ENCODE measurements at regions of chr4 and their contacts with region 1.

Region 1: GRCh38 chr4:41214136-41214824 is at the start of gene APBB2:
- DNase-seq: peak; percentile 95 to 98 (median 96)
- ATAC-seq: peak; percentile 92 to 95 (median 94)
- H3K4me3 ChIP-seq: peak within 1 kb of the TSS; percentile 70 to 93 (median 86)
- H3K27ac ChIP-seq: peak within 1 kb of the TSS; percentile 30 to 94 (median 88)
- H3K4me1 ChIP-seq: peaks cover 0 to 57% (median 27%) of the 10 kb centered on the region in 12 donors
- H3K27me3 ChIP-seq: peaks cover 0 to 8% (median 0%) of the 10 kb centered on the region in 9 donors
- CTCF ChIP-seq: peak; percentile 80 to 97 (median 92)
- POLR2A ChIP-seq: peak in 1 of 2 donors; percentile 94
- total RNA-seq, gene APBB2: 19.1 to 39.1 (median 32.1) TPM

Region 2: DNA sequence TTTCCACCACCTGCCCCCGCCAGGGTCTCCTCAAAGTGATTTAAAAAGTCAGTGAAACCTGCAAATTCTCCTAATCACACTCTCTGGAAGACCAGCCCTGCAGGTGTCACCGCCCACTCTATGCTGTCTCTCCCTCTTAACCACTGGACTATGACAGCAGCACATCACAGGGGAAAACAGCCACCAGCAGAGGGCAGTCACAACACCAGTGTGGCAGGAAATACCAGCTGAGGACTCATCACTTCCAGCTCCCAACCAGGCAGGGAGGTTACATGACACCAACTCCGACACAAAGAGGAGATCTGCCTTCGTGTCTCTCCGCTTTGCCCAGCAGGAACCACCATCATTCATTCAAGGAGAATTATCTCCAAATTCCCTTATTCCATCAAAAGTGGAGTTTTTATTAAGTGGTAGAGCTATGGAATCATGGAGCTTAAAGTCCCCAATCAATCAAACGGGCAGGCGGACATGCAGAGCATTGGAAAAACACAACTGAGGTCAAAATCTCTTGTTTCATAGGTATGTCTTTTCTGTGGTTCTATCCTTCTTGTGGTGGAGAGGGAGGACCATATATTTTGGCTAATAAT is 373.2 kb before region 1 on chr4:
- intact Hi-C with region 1: loop called in 1 of 10 experiments (anchors 2 kb)
- DNase-seq: peak; percentile 63 to 82 (median 70)
- ATAC-seq: peak; percentile 32 to 70 (median 66)
- H3K4me3 ChIP-seq: no peak overlapping the region
- H3K27ac ChIP-seq: peak overlapping the region in 2 of 12 donors; percentile 68 to 73
- H3K4me1 ChIP-seq: peaks cover 0 to 27% (median 12%) of the 10 kb centered on the region in 12 donors
- H3K27me3 ChIP-seq: no peaks in the 10 kb centered on the region
- CTCF ChIP-seq: peak; percentile 40 to 71 (median 56)
- POLR2A ChIP-seq: no peak

Region 3: GRCh38 chr4:40976343-40976742 is 237.9 kb before region 1 on chr4:
- intact Hi-C with region 1: loop called (anchors 1 to 2 kb)
- DNase-seq: peak in 1 of 5 donors; percentile 52
- ATAC-seq: peak in 2 of 4 donors; percentile 52 to 63
- H3K4me3 ChIP-seq: no peak overlapping the region
- H3K27ac ChIP-seq: no peak overlapping the region
- H3K4me1 ChIP-seq: peaks cover 0 to 7% (median 0%) of the 10 kb centered on the region in 12 donors
- H3K27me3 ChIP-seq: no peaks in the 10 kb centered on the region
- CTCF ChIP-seq: peak; percentile 63 to 87 (median 75)
- POLR2A ChIP-seq: no peak

Region 4: DNA sequence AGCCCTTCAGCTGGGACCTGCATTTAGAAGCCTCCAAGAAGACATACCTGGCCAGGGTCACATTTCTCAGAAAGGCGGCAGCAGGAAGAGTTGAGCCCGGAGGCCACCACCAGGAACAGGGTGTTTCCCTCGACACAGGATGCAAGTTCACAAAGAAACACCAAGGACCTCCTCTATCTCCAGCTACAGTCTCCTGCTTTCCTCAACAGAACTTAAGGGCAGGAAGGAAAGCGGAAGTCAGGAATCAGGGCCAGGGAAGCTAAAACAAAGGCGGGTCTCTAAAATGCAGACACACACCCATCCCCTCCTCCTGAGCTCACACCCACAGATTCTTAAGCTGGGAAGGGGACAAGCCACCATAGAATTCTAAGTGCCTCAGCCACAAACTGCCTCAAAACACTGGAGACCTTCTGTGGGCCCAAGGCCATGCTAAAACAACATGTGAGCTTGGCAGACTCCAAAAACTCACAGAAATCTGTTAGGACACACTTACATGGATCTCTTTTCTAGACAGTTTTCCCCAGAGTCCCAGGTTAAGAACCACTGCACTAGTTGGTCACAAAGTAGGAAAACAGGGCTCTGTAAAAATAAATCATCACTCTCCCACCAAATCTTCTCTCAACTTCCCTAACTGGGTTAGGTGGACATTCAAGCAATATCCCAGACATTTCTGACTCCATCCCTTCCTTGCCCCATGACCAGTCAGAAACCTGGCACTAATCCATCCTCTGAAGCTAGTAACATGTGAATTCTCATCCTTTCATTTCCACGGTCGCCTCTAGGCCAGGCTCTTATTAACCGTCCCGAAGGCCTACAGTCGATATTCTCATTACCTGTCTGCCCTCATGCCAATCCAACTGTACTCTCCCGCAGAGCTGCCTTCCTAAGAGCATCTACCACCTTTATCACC is 163.2 kb before region 1 on chr4:
- intact Hi-C with region 1: loop called in 5 of 10 experiments (anchors 2 to 5 kb)
- DNase-seq: peak in 4 of 5 donors; percentile 28 to 62 (median 50)
- ATAC-seq: peak; percentile 64 to 93 (median 81)
- H3K4me3 ChIP-seq: peak overlapping the region in 10 of 12 donors; percentile 6 to 60 (median 38)
- H3K27ac ChIP-seq: peak overlapping the region; percentile 57 to 90 (median 78)
- H3K4me1 ChIP-seq: peaks cover 0 to 46% (median 19%) of the 10 kb centered on the region in 12 donors
- H3K27me3 ChIP-seq: no peaks in the 10 kb centered on the region
- CTCF ChIP-seq: no peak
- POLR2A ChIP-seq: no peak

Region 5: DNA sequence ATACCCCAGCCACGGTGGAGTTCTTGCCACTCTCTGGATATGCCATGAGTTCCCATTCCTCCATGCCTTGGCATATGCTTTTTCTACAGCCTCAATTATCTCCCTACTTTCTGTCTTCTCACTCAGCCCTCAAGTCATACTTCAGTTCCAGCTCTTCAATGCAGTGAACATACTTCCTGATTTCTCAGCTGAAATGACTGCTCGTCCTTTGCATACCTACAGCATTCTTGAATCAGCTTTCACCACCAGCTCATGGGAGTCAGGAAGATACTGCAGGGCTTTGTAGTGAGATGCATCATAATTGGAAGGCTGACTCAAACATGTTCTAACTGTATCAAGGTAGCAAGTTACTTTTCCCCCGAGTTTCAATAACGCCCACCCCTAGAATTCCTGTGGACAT is 118.3 kb before region 1 on chr4:
- intact Hi-C with region 1: loop called in 1 of 10 experiments (anchors 5 kb)
- DNase-seq: no peak
- ATAC-seq: no peak
- H3K4me3 ChIP-seq: no peak overlapping the region
- H3K27ac ChIP-seq: no peak overlapping the region
- H3K4me1 ChIP-seq: peaks cover 0 to 65% (median 7%) of the 10 kb centered on the region in 12 donors
- H3K27me3 ChIP-seq: no peaks in the 10 kb centered on the region
- CTCF ChIP-seq: no peak
- POLR2A ChIP-seq: no peak

Region 6: DNA sequence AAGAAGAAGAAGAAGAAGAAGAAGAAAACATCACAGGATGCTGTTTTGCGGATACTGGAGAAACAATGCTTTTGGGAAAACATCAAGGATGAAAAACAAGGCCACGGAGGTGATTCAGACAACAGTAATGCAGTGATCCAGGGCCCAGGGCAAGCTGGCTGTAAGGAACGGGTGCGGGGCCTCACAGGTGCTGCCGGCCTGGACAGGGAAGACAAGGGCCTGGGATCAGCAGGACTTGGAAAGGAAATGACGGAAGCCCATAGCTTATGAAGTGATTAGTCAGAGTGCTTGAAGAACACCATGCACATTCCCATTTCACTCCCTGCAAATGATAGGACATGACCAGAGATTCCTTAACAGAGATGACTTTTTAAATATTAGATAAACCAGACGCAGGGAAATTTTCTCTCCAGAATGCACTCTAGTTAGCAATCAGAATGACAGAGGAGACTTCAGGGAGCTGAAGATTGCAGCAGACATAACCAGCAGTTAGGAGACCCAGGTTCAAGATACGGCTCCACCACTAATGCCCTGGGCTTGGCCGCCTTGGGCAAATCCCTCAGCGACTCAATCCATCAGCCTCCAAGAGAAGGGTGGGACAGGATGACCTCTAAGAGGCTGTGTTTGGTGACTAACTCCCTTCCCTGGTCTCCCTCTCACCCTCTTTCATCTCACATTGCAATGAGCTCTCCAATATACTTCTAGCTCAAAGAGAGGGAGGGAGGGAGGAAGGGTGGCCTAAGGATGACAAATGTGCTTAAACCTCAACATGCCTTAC is 54.1 kb before region 1 on chr4:
- intact Hi-C with region 1: loop called in 3 of 10 experiments (anchors 5 kb)
- DNase-seq: peak in 1 of 5 donors; percentile 63
- ATAC-seq: peak in 3 of 4 donors; percentile 72 to 76 (median 74)
- H3K4me3 ChIP-seq: no peak overlapping the region
- H3K27ac ChIP-seq: peak overlapping the region in 5 of 12 donors; percentile 1 to 50 (median 22)
- H3K4me1 ChIP-seq: peaks cover 0 to 41% (median 13%) of the 10 kb centered on the region in 12 donors
- H3K27me3 ChIP-seq: no peaks in the 10 kb centered on the region
- CTCF ChIP-seq: no peak
- POLR2A ChIP-seq: no peak

Measured in heart left ventricle (tissue), 16 donors.